Activated CD4-positive, alpha-beta memory T cell treated with anti-CD3 and anti-CD28 coated beads, Interleukin-2, amount 10 ng/mL, durations not matched to agents 7 days and 5 days (primary cell): ENCODE measurements at regions of chr6 and their contacts with region 1.

Region 1: GRCh38 chr6:44470746-44471145 is 83.2 kb downstream of the CDC5L start:
- DNase-seq: no peak
- H3K4me3 Mint-ChIP-seq: no peak overlapping the region
- H3K27ac Mint-ChIP-seq: no peak overlapping the region
- H3K4me1 Mint-ChIP-seq: peaks cover 3% of the 10 kb centered on the region
- H3K27me3 Mint-ChIP-seq: peaks cover 6% of the 10 kb centered on the region

Region 2: GRCh38 chr6:44431118-44431725 is 39.5 kb before region 1 on chr6:
- CTCF ChIA-PET with region 1: interaction called, 12 read pairs
- POLR2A ChIA-PET with region 1: no interaction called
- DNase-seq: peak; percentile 51
- H3K4me3 Mint-ChIP-seq: no peak overlapping the region
- H3K27ac Mint-ChIP-seq: no peak overlapping the region
- H3K4me1 Mint-ChIP-seq: peaks cover 1% of the 10 kb centered on the region
- H3K27me3 Mint-ChIP-seq: no peaks in the 10 kb centered on the region

Region 3: GRCh38 chr6:44456070-44456965 is 14.4 kb before region 1 on chr6:
- CTCF ChIA-PET with region 1: interaction called, 15 read pairs
- POLR2A ChIA-PET with region 1: no interaction called
- DNase-seq: peak; percentile 49
- H3K4me3 Mint-ChIP-seq: no peak overlapping the region
- H3K27ac Mint-ChIP-seq: no peak overlapping the region
- H3K4me1 Mint-ChIP-seq: peaks cover 10% of the 10 kb centered on the region
- H3K27me3 Mint-ChIP-seq: peaks cover 5% of the 10 kb centered on the region